ENCODE measurements at regions of chr12 and their contacts with region 1.

Region 1: DNA sequence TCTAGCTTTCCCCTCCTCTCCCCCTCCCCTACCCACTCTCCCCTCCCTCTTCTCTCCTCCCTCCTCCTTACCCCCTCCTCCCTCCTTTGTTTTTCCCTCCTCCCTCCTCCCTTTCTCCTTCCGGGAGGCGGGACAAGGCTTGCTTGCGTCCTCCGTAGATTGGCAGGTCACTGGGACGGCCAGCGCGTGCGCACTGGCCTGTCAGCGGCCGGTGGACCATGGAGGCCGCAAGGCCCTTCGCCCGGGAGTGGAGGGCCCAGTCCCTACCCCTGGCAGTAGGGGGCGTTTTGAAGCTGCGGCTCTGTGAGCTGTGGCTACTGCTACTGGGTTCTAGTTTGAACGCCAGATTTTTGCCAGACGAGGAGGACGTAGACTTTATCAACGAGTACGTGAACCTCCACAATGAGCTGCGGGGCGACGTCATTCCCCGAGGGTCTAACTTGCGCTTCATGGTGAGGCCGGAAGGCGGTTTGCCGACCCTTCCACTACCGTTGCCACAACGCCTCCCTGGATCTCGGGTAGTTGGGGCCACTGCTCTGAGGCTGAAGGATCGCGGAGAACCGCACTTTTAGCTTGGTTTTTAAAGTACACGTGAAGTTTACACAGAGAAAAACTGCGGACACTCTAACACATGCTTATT is at the start of gene GLIPR1L2:
- DNase-seq: peak; percentile 82
- H3K4me3 Mint-ChIP-seq: peak within 1 kb of the TSS; percentile 86
- H3K27ac Mint-ChIP-seq: peak within 1 kb of the TSS; percentile 79
- H3K4me1 Mint-ChIP-seq: peaks cover 39% of the 10 kb centered on the region
- H3K27me3 Mint-ChIP-seq: peaks cover 5% of the 10 kb centered on the region
- total RNA-seq, gene GLIPR1L2: not detected in 2 replicates

Region 2: GRCh38 chr12:75341832-75342231 is 49.2 kb before region 1 on chr12:
- intact Hi-C with region 1: loop called (anchors 2 kb)
- DNase-seq: no peak
- H3K4me3 Mint-ChIP-seq: no peak overlapping the region
- H3K27ac Mint-ChIP-seq: no peak overlapping the region
- H3K4me1 Mint-ChIP-seq: peaks cover 19% of the 10 kb centered on the region
- H3K27me3 Mint-ChIP-seq: peaks cover 22% of the 10 kb centered on the region

Region 3: GRCh38 chr12:75489613-75490210 is 98.7 kb after region 1 on chr12:
- intact Hi-C with region 1: loop called (anchors 2 kb)
- DNase-seq: no peak
- H3K4me3 Mint-ChIP-seq: peak overlapping the region; percentile 0
- H3K27ac Mint-ChIP-seq: peak overlapping the region; percentile 64
- H3K4me1 Mint-ChIP-seq: peaks cover 24% of the 10 kb centered on the region
- H3K27me3 Mint-ChIP-seq: no peaks in the 10 kb centered on the region

Measured in activated T-helper 1 cell treated with anti-CD3 and anti-CD28 coated beads, Interleukin-12 subunit alpha, Interleukin-12 subunit beta, Interleukin-2, Interleukin-4 antibody, amounts not matched to agents 30 ng/mL and 10 ng/mL and 1 ng/mL, durations not matched to agents 14 hours and 24 hours and 36 hours (primary cell).